ENCODE measurements at regions of chr9 and their contacts with region 1.

Region 1: GRCh38 chr9:125631391-125632085 is 75.5 kb downstream of the MAPKAP1 start:
- DNase-seq: peak; percentile 57
- ATAC-seq: peak; percentile 85
- H3K4me3 ChIP-seq: no peak overlapping the region
- H3K27ac ChIP-seq: no peak overlapping the region
- H3K4me1 ChIP-seq: peaks cover 7% of the 10 kb centered on the region
- H3K27me3 ChIP-seq: no peaks in the 10 kb centered on the region
- CTCF ChIP-seq: peak; percentile 64
- POLR2A ChIP-seq: no peak
- RAD21 ChIP-seq: peak; percentile 80

Region 2: GRCh38 chr9:125472926-125473701 is 158.4 kb before region 1 on chr9:
- CTCF ChIA-PET with region 1: no interaction called
- POLR2A ChIA-PET with region 1: no interaction called
- dilution Hi-C with region 1: no loop called
- in situ Hi-C with region 1: no loop called
- intact Hi-C with region 1: loop called (anchors 10 kb)
- DNase-seq: peak; percentile 73
- ATAC-seq: peak; percentile 71
- H3K4me3 ChIP-seq: no peak overlapping the region
- H3K27ac ChIP-seq: peak overlapping the region; percentile 65
- H3K4me1 ChIP-seq: peaks cover 21% of the 10 kb centered on the region
- H3K27me3 ChIP-seq: no peaks in the 10 kb centered on the region
- CTCF ChIP-seq: 0 out of 2 replicates have a peak, but pooled peaks have one; percentile 9
- POLR2A ChIP-seq: no peak
- RAD21 ChIP-seq: no peak

Region 3: GRCh38 chr9:125558453-125559092 is 73.0 kb before region 1 on chr9:
- CTCF ChIA-PET with region 1: interaction called, 3 read pairs
- POLR2A ChIA-PET with region 1: no interaction called
- dilution Hi-C with region 1: no loop called
- in situ Hi-C with region 1: no loop called
- intact Hi-C with region 1: loop called (anchors 1 kb)
- DNase-seq: peak; percentile 83
- ATAC-seq: peak; percentile 88
- H3K4me3 ChIP-seq: no peak overlapping the region
- H3K27ac ChIP-seq: no peak overlapping the region; the same call in 1 of the 2 replicates
- H3K4me1 ChIP-seq: peaks cover 3% of the 10 kb centered on the region
- H3K27me3 ChIP-seq: no peaks in the 10 kb centered on the region
- CTCF ChIP-seq: peak; percentile 77
- POLR2A ChIP-seq: no peak
- RAD21 ChIP-seq: peak; percentile 85